ENCODE measurements at regions of chr3 and their contacts with region 1.

Region 1: DNA sequence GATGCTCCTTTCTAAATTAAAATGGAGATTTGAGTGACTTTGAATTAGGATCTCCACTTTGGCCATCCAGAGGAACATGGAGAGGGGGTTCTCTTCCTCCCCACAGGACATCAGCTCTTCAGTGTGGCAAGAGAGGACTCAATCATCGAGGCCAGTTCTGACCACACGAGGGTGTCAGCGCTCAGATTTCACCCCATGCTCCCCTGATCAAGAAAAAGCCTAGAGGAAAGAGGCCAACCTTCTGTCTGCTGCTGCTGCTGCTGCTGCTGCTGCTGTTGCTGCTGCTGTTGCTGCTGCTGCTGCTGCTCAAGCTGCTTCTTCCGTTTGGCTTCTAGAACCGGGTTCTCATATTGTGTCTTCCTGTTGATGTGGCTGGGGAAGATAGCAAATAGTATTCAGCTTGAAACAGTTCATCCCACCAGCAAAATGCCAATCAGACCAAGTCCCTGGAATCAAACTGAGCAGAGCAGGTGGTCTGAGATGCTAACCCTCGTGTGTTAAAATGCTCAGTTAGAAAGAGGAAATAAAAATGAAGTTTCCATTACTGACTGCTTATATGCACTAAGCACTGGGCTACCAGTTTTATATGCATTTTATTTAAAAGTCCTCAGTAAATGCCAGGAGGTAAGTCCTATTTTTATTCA is 599.0 kb downstream of the MAGI1 start:
- DNase-seq: peak; percentile 49 to 57
- H3K4me3 ChIP-seq: no peak overlapping the region
- H3K4me3 Mint-ChIP-seq: no peak overlapping the region
- H3K27ac Mint-ChIP-seq: no peak overlapping the region
- H3K4me1 ChIP-seq: no peaks in the 10 kb centered on the region
- H3K4me1 Mint-ChIP-seq: no peaks in the 10 kb centered on the region
- H3K27me3 ChIP-seq: no peaks in the 10 kb centered on the region
- H3K27me3 Mint-ChIP-seq: no peaks in the 10 kb centered on the region
- CTCF ChIP-seq: peak; percentile 50 to 67

Region 2: GRCh38 chr3:65672871-65673815 is 233.4 kb after region 1 on chr3:
- CTCF ChIA-PET with region 1: interaction called, 8 read pairs
- POLR2A ChIA-PET with region 1: interaction called, 5 read pairs
- intact Hi-C with region 1: loop called (anchors 1 kb)
- DNase-seq: peak; percentile 38 to 57
- H3K4me3 ChIP-seq: no peak overlapping the region
- H3K4me3 Mint-ChIP-seq: no peak overlapping the region
- H3K27ac Mint-ChIP-seq: no peak overlapping the region
- H3K4me1 ChIP-seq: no peaks in the 10 kb centered on the region; the same call in 1 of the 2 replicates
- H3K4me1 Mint-ChIP-seq: no peaks in the 10 kb centered on the region
- H3K27me3 ChIP-seq: no peaks in the 10 kb centered on the region
- H3K27me3 Mint-ChIP-seq: no peaks in the 10 kb centered on the region
- CTCF ChIP-seq: peak; percentile 65 to 66

Region 3: GRCh38 chr3:65732051-65732935 is 292.5 kb after region 1 on chr3:
- CTCF ChIA-PET with region 1: interaction called, 6 read pairs
- POLR2A ChIA-PET with region 1: no interaction called
- intact Hi-C with region 1: loop called (anchors 1 kb)
- DNase-seq: peak in 1 of 2 experiments; percentile 59
- H3K4me3 ChIP-seq: no peak overlapping the region
- H3K4me3 Mint-ChIP-seq: no peak overlapping the region
- H3K27ac Mint-ChIP-seq: no peak overlapping the region
- H3K4me1 ChIP-seq: peaks cover 4% of the 10 kb centered on the region; the same call in 1 of the 2 replicates
- H3K4me1 Mint-ChIP-seq: no peaks in the 10 kb centered on the region
- H3K27me3 ChIP-seq: no peaks in the 10 kb centered on the region
- H3K27me3 Mint-ChIP-seq: no peaks in the 10 kb centered on the region
- CTCF ChIP-seq: peak; percentile 57 to 79

Region 4: DNA sequence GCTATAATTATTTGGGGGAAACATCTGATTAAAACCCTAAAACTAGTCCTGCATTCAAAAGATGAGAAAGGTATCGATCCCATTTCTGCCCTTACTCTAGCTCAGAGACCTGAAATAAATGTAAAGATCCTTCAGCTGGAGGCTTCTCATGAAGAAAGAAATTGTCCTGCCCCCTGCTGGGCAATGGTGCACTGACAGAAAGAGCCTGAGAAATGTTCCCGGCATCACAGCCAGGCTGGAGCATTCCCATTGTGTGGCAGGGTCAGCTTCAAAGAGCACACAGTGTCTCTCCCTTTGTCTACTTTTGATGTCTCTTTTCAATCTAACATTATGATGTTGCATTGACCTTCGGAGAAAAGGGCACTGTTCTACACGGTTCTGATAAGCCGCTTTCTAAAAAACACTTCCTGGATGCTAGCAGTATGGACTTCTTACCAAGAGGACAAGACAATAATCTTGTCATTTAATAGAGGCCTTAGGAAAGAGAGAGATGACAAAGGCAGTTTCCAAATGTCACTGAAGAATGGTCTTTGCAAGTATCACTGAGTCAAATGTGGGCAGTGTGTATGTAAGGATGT is 311.4 kb after region 1 on chr3:
- CTCF ChIA-PET with region 1: interaction called, 6 read pairs
- POLR2A ChIA-PET with region 1: interaction called, 3 read pairs
- intact Hi-C with region 1: loop called (anchors 5 kb)
- DNase-seq: peak; percentile 37 to 60
- H3K4me3 ChIP-seq: no peak overlapping the region
- H3K4me3 Mint-ChIP-seq: no peak overlapping the region
- H3K27ac Mint-ChIP-seq: no peak overlapping the region
- H3K4me1 ChIP-seq: no peaks in the 10 kb centered on the region
- H3K4me1 Mint-ChIP-seq: peaks cover 6% of the 10 kb centered on the region
- H3K27me3 ChIP-seq: no peaks in the 10 kb centered on the region
- H3K27me3 Mint-ChIP-seq: no peaks in the 10 kb centered on the region
- CTCF ChIP-seq: peak; percentile 66

Region 5: GRCh38 chr3:66195347-66195783 is 755.6 kb after region 1 on chr3:
- CTCF ChIA-PET with region 1: no interaction called
- POLR2A ChIA-PET with region 1: no interaction called
- intact Hi-C with region 1: loop called (anchors 5 kb)
- DNase-seq: peak; percentile 58 to 62
- H3K4me3 ChIP-seq: peak overlapping the region; percentile 9
- H3K4me3 Mint-ChIP-seq: peak overlapping the region; percentile 45
- H3K27ac Mint-ChIP-seq: no peak overlapping the region
- H3K4me1 ChIP-seq: no peaks in the 10 kb centered on the region
- H3K4me1 Mint-ChIP-seq: no peaks in the 10 kb centered on the region
- H3K27me3 ChIP-seq: no peaks in the 10 kb centered on the region
- H3K27me3 Mint-ChIP-seq: no peaks in the 10 kb centered on the region
- CTCF ChIP-seq: no peak

Measured in Caco-2 (cell line).